ENCODE measurements at regions of chr4 and their contacts with region 1.

Region 1: DNA sequence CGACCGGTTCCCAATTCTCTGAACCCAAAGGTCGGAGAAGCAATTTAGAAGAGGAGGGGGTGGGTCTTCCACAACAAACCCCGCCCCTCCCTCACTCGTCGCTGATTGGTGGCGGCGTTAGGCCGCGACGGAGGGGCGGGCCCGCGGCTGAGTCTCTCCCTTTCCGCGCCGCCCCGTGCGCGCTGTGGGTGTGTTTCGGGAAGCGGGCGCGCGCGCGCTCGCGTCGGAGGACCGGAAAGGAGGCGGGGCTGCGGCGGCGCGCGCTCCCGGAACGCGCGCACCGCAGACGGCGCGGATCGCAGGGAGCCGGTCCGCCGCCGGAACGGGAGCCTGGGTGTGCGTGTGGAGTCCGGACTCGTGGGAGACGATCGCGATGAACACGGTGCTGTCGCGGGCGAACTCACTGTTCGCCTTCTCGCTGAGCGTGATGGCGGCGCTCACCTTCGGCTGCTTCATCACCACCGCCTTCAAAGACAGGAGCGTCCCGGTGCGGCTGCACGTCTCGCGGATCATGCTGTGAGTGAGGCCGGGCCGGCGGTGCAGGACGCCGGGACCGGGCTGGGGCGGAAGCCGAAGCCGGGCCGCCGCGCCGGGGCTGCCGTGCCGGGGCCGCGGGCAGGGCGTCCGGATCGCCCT is at the start of gene SPCS3:
- DNase-seq: peak; percentile 97
- H3K4me3 ChIP-seq: peak within 1 kb of the TSS; percentile 68 to 95 (median 94)
- H3K27ac ChIP-seq: peak within 1 kb of the TSS; percentile 96 to 100 (median 99)
- H3K4me1 ChIP-seq: peaks cover 0 to 44% (median 34%) of the 10 kb centered on the region in 4 donors
- H3K27me3 ChIP-seq: no peaks in the 10 kb centered on the region
- CTCF ChIP-seq: no peak
- EP300 ChIP-seq: no peak
- POLR2A ChIP-seq: peak; percentile 82
- total RNA-seq, gene SPCS3: 23.2 to 77.8 (median 33.8) TPM

Region 2: DNA sequence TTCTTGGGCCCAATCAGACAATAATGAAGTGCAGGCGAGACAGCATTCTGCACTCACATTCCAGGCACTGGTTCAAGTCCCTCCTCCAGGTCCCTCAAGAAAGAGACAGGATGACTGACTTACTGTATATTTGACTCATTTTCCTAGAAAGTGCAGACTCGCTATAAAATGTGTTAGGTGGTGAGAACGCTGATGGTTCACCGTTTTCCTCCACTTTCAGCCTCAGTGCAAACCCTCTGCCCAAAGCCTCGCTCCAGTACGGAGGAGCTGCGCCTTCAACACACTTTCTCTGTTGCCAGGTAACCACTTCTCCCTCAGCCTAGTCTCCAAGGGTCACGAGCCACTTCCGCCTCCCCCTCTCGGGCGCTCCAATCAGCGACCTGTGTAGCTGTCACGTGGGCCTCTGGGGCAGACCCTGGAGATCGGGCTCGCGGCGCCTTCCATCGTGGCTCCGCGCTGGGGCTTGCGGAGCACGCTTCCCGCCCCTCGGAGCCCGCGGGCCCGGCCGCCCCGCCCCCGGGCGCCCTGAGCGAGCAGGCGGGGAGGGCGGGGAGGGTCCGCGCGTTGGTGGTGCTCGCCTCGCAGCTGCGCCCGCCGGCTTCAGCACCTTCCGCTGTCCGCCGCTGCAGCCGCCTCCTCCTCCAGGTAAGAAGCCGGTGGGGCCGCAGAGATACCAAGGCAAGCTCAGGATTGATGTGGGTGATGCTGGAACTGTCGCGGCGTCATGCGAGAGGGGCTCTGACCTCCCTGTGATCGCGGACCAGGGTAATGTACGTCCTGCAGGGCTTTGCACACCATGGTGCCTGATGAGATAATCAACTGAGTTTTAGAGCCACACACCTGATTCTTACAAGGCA is 254.2 kb before region 1 on chr4 and contains the start of gene WDR17:
- in situ Hi-C with region 1: loop called in 1 of 4 experiments (anchors 25 kb)
- intact Hi-C with region 1: no loop called
- DNase-seq: peak; percentile 86
- H3K4me3 ChIP-seq: peak within 1 kb of the TSS; percentile 39 to 58 (median 48)
- H3K27ac ChIP-seq: peak within 1 kb of the TSS in 3 of 4 donors; percentile 13 to 42 (median 16)
- H3K4me1 ChIP-seq: peaks cover 0 to 6% (median 0%) of the 10 kb centered on the region in 4 donors
- H3K27me3 ChIP-seq: no peaks in the 10 kb centered on the region
- CTCF ChIP-seq: no peak
- EP300 ChIP-seq: no peak
- POLR2A ChIP-seq: no peak
- total RNA-seq, gene WDR17: 0.96 to 7.6 (median 1.4) TPM in 3 of 4 donors, not detected in the other

Region 3: DNA sequence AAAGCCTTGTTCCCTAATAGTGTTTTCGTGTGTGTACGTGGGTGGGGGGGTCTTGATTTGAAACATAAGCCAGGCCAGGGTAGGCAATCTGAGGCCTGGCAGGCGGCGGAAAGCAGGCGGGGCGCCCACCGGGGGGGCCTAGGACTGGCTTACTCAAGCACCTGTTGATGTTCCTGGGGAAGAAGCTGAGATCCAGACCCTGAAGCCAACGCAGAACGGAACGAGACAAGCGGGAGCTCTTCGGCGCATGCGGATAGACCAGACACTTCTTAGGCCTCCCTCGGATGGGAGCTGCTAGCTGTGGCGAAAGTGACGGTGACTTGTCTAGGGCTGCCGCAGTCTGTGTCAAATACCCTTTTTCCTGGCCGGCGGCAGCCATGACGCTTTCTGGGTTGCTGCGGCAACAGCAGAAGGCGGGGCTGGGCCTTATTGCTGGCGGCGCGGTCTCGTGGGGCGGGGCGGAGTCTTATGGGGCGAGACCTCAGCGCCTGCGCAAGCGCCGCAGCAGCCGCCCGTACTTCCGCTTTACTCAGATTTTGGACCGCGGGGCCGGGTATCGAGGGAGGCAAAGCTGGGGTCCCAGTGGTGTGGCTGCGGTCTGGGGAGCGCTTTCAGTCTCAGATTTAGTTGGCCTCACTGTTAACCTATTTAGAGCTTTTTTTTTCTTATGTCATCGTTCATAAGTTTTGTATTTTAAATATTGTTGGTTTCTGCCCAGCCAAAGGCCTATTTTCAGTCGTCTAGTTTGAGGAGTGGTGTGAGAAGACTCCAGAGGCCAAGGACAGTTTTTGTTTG is 124.4 kb before region 1 on chr4 and contains the start of gene SPATA4:
- in situ Hi-C with region 1: loop called in 1 of 4 experiments (anchors 10 kb)
- intact Hi-C with region 1: no loop called
- DNase-seq: peak; percentile 95
- H3K4me3 ChIP-seq: peak within 1 kb of the TSS; percentile 37 to 68 (median 51)
- H3K27ac ChIP-seq: peak within 1 kb of the TSS; percentile 74 to 86 (median 80)
- H3K4me1 ChIP-seq: peaks cover 0 to 19% (median 0%) of the 10 kb centered on the region in 4 donors
- H3K27me3 ChIP-seq: peaks cover 5% of the 10 kb centered on the region
- CTCF ChIP-seq: no peak
- EP300 ChIP-seq: no peak
- POLR2A ChIP-seq: peak; percentile 43
- total RNA-seq, gene SPATA4: not detected